CD14-positive monocyte (primary cell): ENCODE measurements at regions of chr7 and their contacts with region 1.

Region 1: GRCh38 chr7:36152756-36153570 is at the start of gene EEPD1:
- DNase-seq: peak; percentile 97 to 100 (median 99)
- H3K4me3 ChIP-seq: peak within 1 kb of the TSS; percentile 57 to 94 (median 83)
- H3K4me3 Mint-ChIP-seq: peak within 1 kb of the TSS; percentile 93 to 99
- H3K27ac ChIP-seq: peak within 1 kb of the TSS; percentile 53 to 83
- H3K27ac Mint-ChIP-seq: peak within 1 kb of the TSS; percentile 78 to 90 (median 85)
- H3K4me1 ChIP-seq: peaks cover 36 to 52% of the 10 kb centered on the region in 2 donors
- H3K4me1 Mint-ChIP-seq: peaks cover 54% of the 10 kb centered on the region
- H3K27me3 ChIP-seq: no peaks in the 10 kb centered on the region
- H3K27me3 Mint-ChIP-seq: peaks cover 0 to 5% (median 0%) of the 10 kb centered on the region in 3 donors
- CTCF ChIP-seq: no peak
- polyA plus RNA-seq, gene EEPD1: 8.6 to 14.4 (median 12.6) TPM

Region 2: DNA sequence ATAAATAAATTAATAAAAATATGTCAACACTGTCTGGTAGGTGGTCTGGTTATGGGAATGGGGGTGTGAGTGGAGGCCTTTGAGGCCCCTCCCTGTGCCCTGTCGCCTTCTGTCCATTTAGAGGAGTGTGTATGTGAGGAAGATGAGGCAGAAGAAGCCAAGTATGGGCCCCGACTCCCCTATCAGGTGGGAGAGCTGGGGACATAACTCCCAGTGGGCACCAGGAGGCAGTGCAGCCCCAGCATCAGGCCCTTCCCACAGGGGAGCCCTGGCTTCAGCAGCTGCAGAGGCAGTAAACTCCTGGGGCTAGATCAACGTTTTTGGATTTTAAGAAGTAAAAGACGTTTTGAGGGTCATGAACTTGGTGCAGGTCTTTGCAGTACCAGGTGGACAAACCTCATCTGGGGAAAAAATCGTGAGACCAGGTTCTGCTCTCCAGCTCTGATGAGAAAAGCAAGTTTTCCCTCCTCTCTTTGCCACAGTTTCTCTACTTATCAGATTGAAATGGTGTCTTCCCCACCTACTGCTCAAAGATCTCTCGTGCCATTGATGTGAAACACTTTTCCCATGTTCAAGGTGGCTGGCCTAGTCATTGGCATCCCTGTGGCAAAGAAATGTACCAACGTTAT is 167.7 kb before region 1 on chr7:
- intact Hi-C with region 1: loop called in 1 of 2 experiments (anchors 10 kb)
- DNase-seq: peak; percentile 65 to 77 (median 75)
- H3K4me3 ChIP-seq: no peak overlapping the region
- H3K4me3 Mint-ChIP-seq: no peak overlapping the region
- H3K27ac ChIP-seq: no peak overlapping the region
- H3K27ac Mint-ChIP-seq: peak overlapping the region in 1 of 7 donors; percentile 40
- H3K4me1 ChIP-seq: no peaks in the 10 kb centered on the region
- H3K4me1 Mint-ChIP-seq: no peaks in the 10 kb centered on the region
- H3K27me3 ChIP-seq: no peaks in the 10 kb centered on the region
- H3K27me3 Mint-ChIP-seq: peaks cover 0 to 5% (median 0%) of the 10 kb centered on the region in 3 donors
- CTCF ChIP-seq: peak; percentile 94

Region 3: GRCh38 chr7:36115448-36116321 is 37.3 kb before region 1 on chr7:
- intact Hi-C with region 1: loop called in 1 of 2 experiments (anchors 5 kb)
- DNase-seq: peak; percentile 88 to 92 (median 88)
- H3K4me3 ChIP-seq: no peak overlapping the region
- H3K4me3 Mint-ChIP-seq: no peak overlapping the region
- H3K27ac ChIP-seq: peak overlapping the region in 1 of 2 donors; percentile 63
- H3K27ac Mint-ChIP-seq: peak overlapping the region; percentile 71 to 87 (median 84)
- H3K4me1 ChIP-seq: peaks cover 44 to 56% of the 10 kb centered on the region in 2 donors
- H3K4me1 Mint-ChIP-seq: peaks cover 54% of the 10 kb centered on the region
- H3K27me3 ChIP-seq: no peaks in the 10 kb centered on the region
- H3K27me3 Mint-ChIP-seq: peaks cover 0 to 2% (median 2%) of the 10 kb centered on the region in 3 donors
- CTCF ChIP-seq: no peak

Region 4: DNA sequence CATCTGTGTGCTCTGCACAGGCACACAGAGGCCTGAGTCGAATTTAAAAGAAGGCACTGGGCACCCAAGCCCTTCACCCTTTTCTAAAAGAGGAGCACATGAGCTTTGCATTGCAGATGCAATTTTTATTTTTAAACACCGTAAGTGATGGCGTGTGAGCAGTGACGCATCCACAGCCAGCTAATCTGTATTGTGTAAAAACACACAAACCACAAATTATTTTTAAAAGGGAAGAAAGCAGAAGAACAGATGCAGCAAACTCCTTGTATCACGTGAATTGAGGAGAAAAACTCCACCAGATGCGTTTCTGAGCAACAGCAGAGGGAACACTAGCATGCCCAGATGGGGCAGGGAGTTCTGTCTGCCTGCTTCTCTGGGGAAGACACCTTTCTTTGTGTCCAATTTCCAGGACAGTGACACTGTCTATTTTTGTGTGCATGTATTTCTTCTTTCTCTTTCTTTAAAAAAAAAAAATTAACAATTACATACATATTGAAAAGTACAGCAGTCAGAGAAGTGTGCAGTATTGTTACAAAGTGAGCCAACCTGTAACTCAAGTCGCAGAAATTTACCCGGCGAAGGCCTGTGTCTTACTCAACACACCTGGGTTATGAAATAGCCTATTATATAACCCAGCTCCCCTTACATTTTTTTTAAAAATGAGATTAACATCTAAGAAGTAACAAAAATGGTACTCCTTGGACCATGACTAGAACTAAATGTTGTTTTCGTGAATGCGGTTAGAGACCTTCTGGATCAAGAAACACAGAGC is 39.3 kb after region 1 on chr7:
- intact Hi-C with region 1: loop called in 1 of 2 experiments (anchors 5 kb)
- DNase-seq: peak; percentile 93 to 97 (median 96)
- H3K4me3 ChIP-seq: peak overlapping the region in 1 of 3 experiments; percentile 38
- H3K4me3 Mint-ChIP-seq: peak overlapping the region; percentile 51 to 67
- H3K27ac ChIP-seq: peak overlapping the region; percentile 76 to 96
- H3K27ac Mint-ChIP-seq: peak overlapping the region; percentile 95 to 98 (median 96)
- H3K4me1 ChIP-seq: peaks cover 47% of the 10 kb centered on the region in 2 donors
- H3K4me1 Mint-ChIP-seq: peaks cover 60% of the 10 kb centered on the region
- H3K27me3 ChIP-seq: no peaks in the 10 kb centered on the region
- H3K27me3 Mint-ChIP-seq: peaks cover 0 to 9% (median 1%) of the 10 kb centered on the region in 3 donors
- CTCF ChIP-seq: peak; percentile 6

Region 5: GRCh38 chr7:36202398-36202797 is 49.4 kb after region 1 on chr7:
- intact Hi-C with region 1: loop called (anchors 5 kb)
- DNase-seq: no peak
- H3K4me3 ChIP-seq: no peak overlapping the region
- H3K4me3 Mint-ChIP-seq: no peak overlapping the region
- H3K27ac ChIP-seq: no peak overlapping the region
- H3K27ac Mint-ChIP-seq: no peak overlapping the region
- H3K4me1 ChIP-seq: peaks cover 27 to 32% of the 10 kb centered on the region in 2 donors
- H3K4me1 Mint-ChIP-seq: peaks cover 45% of the 10 kb centered on the region
- H3K27me3 ChIP-seq: no peaks in the 10 kb centered on the region
- H3K27me3 Mint-ChIP-seq: peaks cover 0 to 4% (median 2%) of the 10 kb centered on the region in 3 donors
- CTCF ChIP-seq: no peak

Region 6: DNA sequence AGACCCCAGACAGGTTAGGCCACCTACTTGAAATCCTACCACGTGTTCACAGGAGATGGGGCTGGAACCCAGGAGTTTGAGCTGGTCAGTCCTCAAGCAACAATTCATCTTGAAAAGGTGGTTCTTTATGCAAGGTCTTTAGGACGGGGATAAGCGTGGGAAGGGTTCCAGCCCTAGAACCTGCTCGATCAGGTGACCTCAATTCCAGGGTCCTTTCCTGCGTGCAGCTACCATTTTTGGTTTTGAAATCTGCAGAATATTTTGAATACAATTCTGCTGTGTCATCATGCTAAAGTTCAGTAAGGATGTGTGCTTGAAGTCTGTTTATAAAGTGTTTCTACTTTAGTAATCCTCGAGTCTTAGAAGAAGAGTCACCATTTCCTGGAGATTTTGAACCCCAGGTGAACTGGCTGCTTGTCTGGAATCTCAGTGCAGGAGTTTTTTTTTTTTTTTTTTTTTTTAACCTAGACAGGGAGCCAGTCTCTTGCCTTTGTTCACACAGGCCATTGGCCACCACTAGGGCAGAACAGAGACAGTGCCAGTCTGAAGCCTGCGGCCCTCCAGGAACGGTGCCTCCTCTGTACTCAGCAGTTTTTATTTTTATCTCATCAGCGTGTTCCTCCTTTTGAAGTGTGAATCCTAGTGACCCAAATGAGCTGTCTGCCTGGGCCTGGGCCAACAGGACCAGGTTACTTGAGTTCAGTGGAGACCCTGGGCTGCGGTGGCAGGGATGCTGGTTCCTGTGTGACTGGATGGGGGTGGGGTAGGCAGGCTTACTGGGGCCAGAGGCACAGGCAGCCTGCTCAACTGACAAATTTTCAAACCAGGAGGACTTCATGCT is 54.7 kb after region 1 on chr7:
- intact Hi-C with region 1: loop called (anchors 5 kb)
- DNase-seq: peak; percentile 77 to 87 (median 84)
- H3K4me3 ChIP-seq: peak overlapping the region in 1 of 3 experiments; percentile 4
- H3K4me3 Mint-ChIP-seq: peak overlapping the region; percentile 16 to 51
- H3K27ac ChIP-seq: peak overlapping the region; percentile 71 to 82
- H3K27ac Mint-ChIP-seq: peak overlapping the region; percentile 86 to 93 (median 91)
- H3K4me1 ChIP-seq: peaks cover 36 to 39% of the 10 kb centered on the region in 2 donors
- H3K4me1 Mint-ChIP-seq: peaks cover 47% of the 10 kb centered on the region
- H3K27me3 ChIP-seq: no peaks in the 10 kb centered on the region
- H3K27me3 Mint-ChIP-seq: peaks cover 0 to 4% (median 3%) of the 10 kb centered on the region in 3 donors
- CTCF ChIP-seq: peak; percentile 23

Region 7: DNA sequence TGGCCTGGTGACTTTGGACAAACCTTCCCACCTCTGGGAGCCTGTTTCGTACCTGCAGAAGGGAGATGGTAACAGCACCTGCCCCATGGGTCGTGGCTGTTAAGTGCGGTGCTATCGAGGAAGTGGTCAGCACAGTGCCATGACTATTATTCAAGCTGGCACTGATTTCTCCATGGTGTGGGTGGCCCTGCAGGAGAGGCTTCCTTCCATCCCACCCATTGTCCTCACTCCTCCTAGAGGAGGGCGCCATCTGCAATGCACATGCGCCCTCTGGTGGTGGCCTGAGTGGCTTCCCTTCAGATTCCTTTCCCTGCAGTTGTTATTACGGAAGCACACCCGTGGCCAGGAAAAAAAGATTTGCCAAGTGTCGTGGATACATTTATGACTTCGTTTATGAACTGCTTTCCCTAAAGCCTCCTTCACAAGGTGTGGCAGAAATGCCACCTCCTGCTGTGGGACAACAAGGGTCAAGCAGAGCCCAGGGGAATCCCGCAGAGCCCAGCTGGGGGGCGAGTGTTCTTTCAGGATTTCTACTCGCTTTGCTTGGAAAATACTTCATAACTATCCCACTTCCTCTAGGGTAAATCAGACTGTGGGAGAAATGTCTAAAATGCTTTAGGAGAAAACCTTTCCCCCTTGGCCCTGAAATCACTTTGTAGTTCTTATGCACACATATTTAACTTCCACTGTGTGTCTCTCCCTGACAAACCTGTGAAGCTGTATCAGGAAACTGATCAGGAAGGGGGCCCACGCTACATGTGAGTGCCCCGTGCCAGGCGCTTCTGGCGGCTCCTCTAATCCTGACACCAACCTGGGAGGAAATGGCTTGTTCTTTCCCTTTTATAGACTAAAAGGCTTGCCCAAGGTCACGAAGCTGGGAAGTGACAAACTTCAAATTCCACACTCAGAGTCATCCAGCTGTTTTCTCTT is 138.7 kb after region 1 on chr7:
- intact Hi-C with region 1: loop called (anchors 5 to 10 kb)
- DNase-seq: peak; percentile 80 to 83 (median 82)
- H3K4me3 ChIP-seq: peak overlapping the region; percentile 8 to 64 (median 37)
- H3K4me3 Mint-ChIP-seq: peak overlapping the region; percentile 72 to 87
- H3K27ac ChIP-seq: peak overlapping the region in 1 of 2 donors; percentile 51
- H3K27ac Mint-ChIP-seq: peak overlapping the region in 5 of 7 donors; percentile 73 to 93 (median 84)
- H3K4me1 ChIP-seq: peaks cover 28 to 29% of the 10 kb centered on the region in 2 donors
- H3K4me1 Mint-ChIP-seq: peaks cover 44% of the 10 kb centered on the region
- H3K27me3 ChIP-seq: no peaks in the 10 kb centered on the region
- H3K27me3 Mint-ChIP-seq: peaks cover 0 to 8% (median 0%) of the 10 kb centered on the region in 3 donors
- CTCF ChIP-seq: peak; percentile 99

Region 8: DNA sequence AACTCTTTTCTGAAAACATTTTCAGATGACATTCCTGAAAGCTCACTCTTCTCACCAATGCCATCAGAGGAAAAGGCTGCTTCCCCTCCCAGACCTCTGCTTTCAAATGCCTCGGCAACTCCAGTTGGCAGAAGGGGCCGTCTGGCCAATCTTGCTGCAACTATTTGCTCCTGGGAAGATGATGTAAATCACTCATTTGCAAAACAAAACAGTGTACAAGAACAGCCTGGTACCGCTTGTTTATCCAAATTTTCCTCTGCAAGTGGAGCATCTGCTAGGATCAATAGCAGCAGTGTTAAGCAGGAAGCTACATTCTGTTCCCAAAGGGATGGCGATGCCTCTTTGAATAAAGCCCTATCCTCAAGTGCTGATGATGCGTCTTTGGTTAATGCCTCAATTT is 253.2 kb after region 1 on chr7:
- intact Hi-C with region 1: no loop called
- DNase-seq: no peak
- H3K4me3 ChIP-seq: no peak overlapping the region
- H3K4me3 Mint-ChIP-seq: no peak overlapping the region
- H3K27ac ChIP-seq: no peak overlapping the region
- H3K27ac Mint-ChIP-seq: peak overlapping the region in 2 of 7 donors; percentile 15 to 80
- H3K4me1 ChIP-seq: no peaks in the 10 kb centered on the region
- H3K4me1 Mint-ChIP-seq: no peaks in the 10 kb centered on the region
- H3K27me3 ChIP-seq: no peaks in the 10 kb centered on the region
- H3K27me3 Mint-ChIP-seq: peaks cover 0 to 2% (median 0%) of the 10 kb centered on the region in 3 donors
- CTCF ChIP-seq: no peak

Region 9: GRCh38 chr7:36583318-36583717 is 430.4 kb after region 1 on chr7:
- intact Hi-C with region 1: no loop called
- DNase-seq: no peak
- H3K4me3 ChIP-seq: no peak overlapping the region
- H3K4me3 Mint-ChIP-seq: no peak overlapping the region
- H3K27ac ChIP-seq: peak overlapping the region in 1 of 2 donors; percentile 27
- H3K27ac Mint-ChIP-seq: peak overlapping the region in 3 of 7 donors; percentile 30 to 78 (median 72)
- H3K4me1 ChIP-seq: no peaks in the 10 kb centered on the region
- H3K4me1 Mint-ChIP-seq: no peaks in the 10 kb centered on the region
- H3K27me3 ChIP-seq: no peaks in the 10 kb centered on the region
- H3K27me3 Mint-ChIP-seq: no peaks in the 10 kb centered on the region
- CTCF ChIP-seq: no peak